ENCODE measurements at regions of chr1 and their contacts with region 1.

Region 1: DNA sequence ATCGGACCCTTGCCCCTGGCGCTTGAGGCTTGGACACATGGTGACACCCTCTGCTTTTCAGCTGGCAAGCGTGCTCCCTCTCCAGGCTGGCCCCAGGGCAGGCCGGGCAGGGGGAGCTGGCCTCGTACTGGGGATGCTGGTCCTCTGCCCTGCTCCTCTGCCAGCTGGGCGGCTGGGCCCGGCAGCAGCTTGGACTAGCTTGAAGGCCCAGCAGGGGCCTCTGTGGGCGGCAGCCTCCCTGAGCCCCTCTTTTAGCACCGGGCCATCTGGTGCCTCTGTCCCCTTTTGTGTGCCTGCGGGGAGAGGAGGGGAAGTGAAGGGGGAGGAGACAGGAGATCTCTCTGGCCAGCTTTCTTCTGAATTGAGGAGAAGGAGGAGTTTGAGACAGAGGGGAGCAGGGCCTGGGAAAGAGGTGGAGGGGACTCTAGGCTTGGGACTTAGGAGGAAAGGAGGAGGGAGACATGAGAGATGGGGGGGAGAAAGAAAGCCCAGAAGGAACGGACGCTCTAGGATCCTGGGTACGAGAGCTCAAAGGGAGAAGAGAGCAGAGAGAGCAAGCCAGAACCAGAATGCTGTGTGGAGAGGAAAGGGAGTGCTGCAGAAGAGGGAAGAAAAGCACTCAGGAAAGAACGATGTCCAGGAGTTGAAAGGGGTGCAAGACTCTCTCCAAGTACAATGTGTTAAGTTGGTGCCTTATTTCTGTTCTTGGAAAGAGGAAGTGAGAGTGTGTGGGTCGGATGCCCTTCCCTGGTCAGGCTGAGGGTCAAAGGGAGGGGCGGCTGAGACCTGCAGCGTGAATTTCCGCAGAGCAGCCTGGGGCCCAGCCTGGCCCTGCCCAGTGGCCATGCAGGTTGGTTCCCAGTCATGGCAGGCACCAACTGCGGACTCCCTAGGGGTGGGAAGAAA is 40.3 kb downstream of the IER5 start:
- H3K4me3 ChIP-seq: no peak overlapping the region
- H3K27ac ChIP-seq: no peak overlapping the region
- H3K4me1 ChIP-seq: peaks cover 3% of the 10 kb centered on the region; the same call in 1 of the 2 replicates
- CTCF ChIP-seq: no peak

Region 2: GRCh38 chr1:181077576-181078242 is 51.1 kb before region 1 on chr1:
- CTCF ChIA-PET with region 1: no interaction called
- POLR2A ChIA-PET with region 1: no interaction called
- H3K4me3 ChIP-seq: no peak overlapping the region
- H3K27ac ChIP-seq: no peak overlapping the region
- H3K4me1 ChIP-seq: peaks cover 3% of the 10 kb centered on the region; the same call in 1 of the 2 replicates
- CTCF ChIP-seq: no peak

Region 3: GRCh38 chr1:181117638-181118449 is 11.0 kb before region 1 on chr1:
- CTCF ChIA-PET with region 1: interaction called, 3 read pairs
- POLR2A ChIA-PET with region 1: interaction called, 16 read pairs
- H3K4me3 ChIP-seq: no peak overlapping the region
- H3K27ac ChIP-seq: peak overlapping the region; percentile 27; the same call in 1 of the 2 replicates
- H3K4me1 ChIP-seq: peaks cover 5% of the 10 kb centered on the region; the same call in 1 of the 2 replicates
- CTCF ChIP-seq: no peak

Region 4: DNA sequence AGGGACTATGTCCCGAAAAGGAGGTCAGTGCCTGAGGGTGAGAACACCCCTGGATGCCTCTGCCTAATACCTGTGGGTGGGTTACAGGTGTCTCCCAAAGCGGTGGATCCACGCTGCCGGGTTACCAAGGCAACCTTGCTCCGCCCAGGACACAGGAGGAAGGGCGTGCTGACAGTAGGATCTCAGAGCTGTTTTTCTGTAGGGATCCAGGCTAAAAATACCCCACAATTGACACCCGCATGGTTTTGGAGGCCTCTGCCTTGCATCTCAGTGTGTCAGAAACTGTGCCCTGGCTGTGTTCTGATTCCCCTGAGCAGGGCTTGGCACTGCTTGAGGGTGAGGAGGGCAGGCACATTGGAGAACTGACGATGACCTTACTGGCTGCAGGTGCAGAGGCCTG is 77.7 kb after region 1 on chr1:
- CTCF ChIA-PET with region 1: no interaction called
- POLR2A ChIA-PET with region 1: no interaction called
- H3K4me3 ChIP-seq: no peak overlapping the region
- H3K27ac ChIP-seq: no peak overlapping the region
- H3K4me1 ChIP-seq: no peaks in the 10 kb centered on the region
- CTCF ChIP-seq: no peak